A549 (cell line): ENCODE measurements at regions of chr9 and their contacts with region 1.

Region 1: DNA sequence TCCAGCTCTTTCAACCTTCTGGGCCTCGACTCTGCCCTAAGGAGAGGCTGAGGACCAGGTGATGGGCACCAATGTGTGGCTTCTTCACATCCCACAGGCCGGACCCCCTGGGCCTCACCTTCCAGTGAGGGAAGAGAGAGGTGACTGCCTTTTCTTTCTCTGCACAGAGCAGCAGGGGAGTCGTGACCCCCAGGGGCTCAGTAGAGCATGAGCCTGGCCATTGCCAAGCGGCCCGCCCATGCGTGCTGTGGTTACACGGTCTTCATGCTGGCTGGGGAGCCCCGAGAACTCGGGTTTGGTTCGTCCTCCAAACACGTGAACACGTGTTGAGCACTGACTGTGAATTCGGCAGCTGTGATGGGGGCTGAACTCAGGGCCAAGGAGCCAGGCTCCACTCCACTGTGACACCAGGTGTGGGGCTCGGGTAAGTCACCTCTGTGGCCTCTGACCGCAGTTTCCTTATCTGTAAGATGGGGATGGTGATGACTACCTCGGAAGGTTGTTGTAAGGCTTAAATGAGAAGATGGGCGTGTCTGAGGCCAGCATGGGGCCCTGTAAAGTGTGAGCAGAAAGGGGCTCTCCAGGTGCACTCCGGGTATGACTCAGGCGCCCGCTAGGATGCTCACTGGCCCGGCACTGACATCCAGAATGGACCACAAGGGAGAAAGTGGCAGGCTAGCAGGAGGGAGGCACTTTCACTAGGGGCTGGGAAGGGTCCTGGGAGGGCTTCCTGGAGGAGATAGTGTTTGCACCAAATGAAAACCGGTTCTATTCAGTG is 13.4 kb upstream of the GRHPR start:
- DNase-seq: no peak
- ATAC-seq: no peak
- H3K4me3 ChIP-seq: no peak overlapping the region
- H3K27ac ChIP-seq: no peak overlapping the region
- H3K4me1 ChIP-seq: no peaks in the 10 kb centered on the region
- CTCF ChIP-seq: no peak
- EP300 ChIP-seq: no peak
- POLR2A ChIP-seq: no peak
- RAD21 ChIP-seq: no peak

Region 2: DNA sequence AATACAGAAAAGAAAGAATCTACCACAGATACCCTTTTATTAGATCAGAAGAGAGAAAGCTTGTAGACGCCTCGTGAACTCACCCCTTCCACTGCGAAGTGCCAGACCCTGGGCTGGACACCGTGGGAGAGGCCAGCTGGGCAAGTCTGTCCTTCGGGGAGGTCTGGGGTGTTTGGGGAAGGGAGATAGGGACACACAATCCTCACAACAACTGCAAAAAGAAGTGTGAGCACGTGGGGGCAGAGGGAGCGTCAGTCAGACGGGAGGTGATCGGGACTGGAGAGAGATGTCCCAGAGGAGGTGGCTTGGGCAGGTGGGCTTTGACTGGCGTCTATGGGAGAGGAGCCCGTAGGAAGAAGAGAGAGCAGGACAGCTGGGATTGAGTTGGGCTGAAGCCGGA is 13.9 kb before region 1 on chr9:
- CTCF ChIA-PET with region 1: interaction called, 11 read pairs
- POLR2A ChIA-PET with region 1: no interaction called
- DNase-seq: no peak
- ATAC-seq: 0 out of 6 replicates have a peak, but pooled peaks of 1 of the 2 experiments have one; percentile 21
- H3K4me3 ChIP-seq: no peak overlapping the region
- H3K27ac ChIP-seq: no peak overlapping the region
- H3K4me1 ChIP-seq: no peaks in the 10 kb centered on the region
- CTCF ChIP-seq: no peak
- EP300 ChIP-seq: no peak
- POLR2A ChIP-seq: no peak
- RAD21 ChIP-seq: no peak